Pancreas (tissue), 10 donors: ENCODE measurements at regions of chr7 and their contacts with region 1.

Region 1: DNA sequence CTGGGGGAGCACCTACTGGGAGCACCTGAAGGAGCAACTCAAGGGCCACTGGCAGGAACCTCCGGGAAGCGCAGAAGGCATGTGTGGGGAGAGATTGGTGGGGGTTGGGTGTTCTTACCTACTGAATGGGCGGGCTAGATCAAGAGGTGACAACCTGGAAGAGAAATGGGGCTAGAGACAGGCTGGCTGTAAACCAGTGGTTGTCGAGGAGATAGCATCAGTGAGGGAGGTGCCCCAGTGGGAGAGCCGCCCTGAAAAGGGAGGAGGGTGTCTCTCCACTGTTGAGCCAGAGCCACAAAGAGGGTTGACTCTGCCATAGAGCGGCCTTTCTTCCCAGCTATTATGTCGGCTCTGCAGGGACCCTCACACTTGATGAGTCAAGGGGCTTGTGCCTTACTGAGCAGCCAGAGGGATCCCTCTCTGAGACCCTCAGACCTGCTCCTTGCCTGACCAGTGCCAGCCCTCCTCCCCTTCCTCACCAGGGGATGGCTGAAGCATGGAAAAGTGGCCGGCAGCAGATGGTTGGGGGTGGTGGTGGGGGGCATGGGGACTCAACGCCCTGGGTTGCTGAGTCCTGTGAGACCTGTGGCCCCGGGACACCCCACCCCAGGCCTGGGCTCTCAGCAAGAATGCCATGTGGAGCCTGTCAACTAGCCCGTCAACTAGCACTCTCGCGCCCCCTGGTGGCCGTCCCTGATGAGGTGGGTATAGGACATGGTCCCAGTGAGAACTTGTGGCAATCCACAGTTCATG is 36.5 kb upstream of the PURB start:
- DNase-seq: peak; percentile 72 to 100 (median 91)
- ATAC-seq: peak; percentile 98 to 100 (median 99)
- H3K4me3 ChIP-seq: no peak overlapping the region
- H3K27ac ChIP-seq: no peak overlapping the region
- H3K4me1 ChIP-seq: no peaks in the 10 kb centered on the region
- H3K27me3 ChIP-seq: no peaks in the 10 kb centered on the region
- CTCF ChIP-seq: peak; percentile 75 to 93 (median 88)

Region 2: DNA sequence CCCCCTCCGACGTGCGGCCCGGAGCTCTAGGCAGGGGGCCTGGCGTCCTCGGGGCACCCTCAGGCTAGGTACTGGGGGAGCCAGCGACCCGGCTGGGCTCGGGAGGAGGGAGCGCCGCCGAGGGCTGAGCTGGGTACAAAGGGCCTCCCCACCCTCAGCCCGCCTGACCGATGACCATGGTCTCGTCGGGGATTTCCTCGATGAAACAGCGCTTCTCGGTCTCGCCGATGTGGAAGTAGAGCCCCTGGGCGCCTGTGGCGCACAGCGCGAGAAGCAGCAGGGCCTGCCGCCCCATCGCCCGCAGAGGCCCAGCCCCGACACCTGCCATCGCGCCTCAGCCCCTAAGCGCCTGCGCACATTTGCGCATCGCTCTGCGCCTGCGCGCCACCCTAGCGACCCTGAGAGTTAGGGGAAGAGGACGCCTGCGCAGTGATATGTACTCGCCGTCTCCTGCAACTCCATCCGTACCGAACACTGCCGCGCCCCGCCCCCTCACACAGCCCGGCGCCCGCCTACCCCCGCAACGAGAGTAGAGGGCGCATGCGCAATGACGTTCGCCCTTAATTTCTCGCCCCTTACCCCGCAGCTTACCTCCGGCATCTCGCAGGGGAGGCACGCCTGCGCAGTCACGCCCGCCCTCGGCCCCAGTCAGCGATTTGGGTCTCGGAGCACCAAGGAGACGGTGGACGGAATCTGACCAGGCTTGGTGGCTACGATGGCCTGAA is 339.7 kb before region 1 on chr7 and contains the start of gene TMED4:
- intact Hi-C with region 1: loop called in 2 of 3 experiments (anchors 5 to 10 kb)
- DNase-seq: peak; percentile 99 to 100 (median 100)
- ATAC-seq: peak; percentile 95 to 98 (median 96)
- H3K4me3 ChIP-seq: peak within 1 kb of the TSS; percentile 74 to 99 (median 92)
- H3K27ac ChIP-seq: peak within 1 kb of the TSS; percentile 92 to 99 (median 98)
- H3K4me1 ChIP-seq: peaks cover 7 to 16% (median 16%) of the 10 kb centered on the region in 3 donors
- H3K27me3 ChIP-seq: no peaks in the 10 kb centered on the region
- CTCF ChIP-seq: no peak
- total RNA-seq, gene TMED4: 38.2 to 53.0 (median 47.0) TPM

Region 3: DNA sequence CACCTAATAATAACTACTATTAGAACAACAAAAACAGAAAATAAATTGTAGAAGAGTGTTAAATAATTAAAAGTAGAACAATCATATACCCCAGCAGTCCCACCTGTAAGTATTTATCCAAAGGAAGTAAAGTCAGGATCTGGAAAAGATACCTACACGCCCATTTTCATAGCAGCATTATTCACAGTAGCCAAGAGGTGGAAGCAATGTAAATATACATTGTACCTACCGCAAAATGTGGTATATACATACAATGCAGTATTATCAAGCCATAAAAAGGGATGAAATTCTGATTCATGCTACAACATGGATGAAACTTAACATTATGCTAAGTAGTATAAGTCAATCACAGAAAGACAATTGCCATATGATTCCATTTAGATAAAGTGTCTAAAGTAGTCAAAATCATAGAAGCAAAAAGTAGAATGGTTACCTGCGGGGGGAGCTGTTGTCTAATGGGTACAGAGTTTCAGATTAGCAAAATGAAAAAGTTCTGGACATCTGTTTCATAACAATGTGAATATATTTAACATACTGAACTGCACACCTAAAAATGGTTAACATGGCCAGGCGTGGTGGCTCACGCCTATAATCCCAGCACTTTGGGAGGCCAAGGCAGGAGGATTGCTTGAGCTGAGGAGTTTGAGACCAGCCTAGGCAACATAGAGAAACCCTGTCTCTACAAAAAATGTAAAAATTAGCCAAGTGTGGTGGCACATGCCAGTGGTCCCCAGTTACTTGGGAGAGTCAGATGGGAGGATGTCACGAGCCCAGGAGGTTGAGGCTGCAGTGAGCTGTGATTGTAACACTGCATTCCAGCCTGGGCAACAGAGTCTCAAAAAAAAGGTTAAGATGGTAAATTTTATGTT is 333.7 kb before region 1 on chr7:
- intact Hi-C with region 1: loop called in 2 of 3 experiments (anchors 5 to 10 kb)
- DNase-seq: peak in 3 of 6 donors; percentile 43 to 59 (median 48)
- ATAC-seq: peak; percentile 81 to 95 (median 92)
- H3K4me3 ChIP-seq: no peak overlapping the region
- H3K27ac ChIP-seq: no peak overlapping the region
- H3K4me1 ChIP-seq: peaks cover 0 to 5% (median 1%) of the 10 kb centered on the region in 3 donors
- H3K27me3 ChIP-seq: no peaks in the 10 kb centered on the region
- CTCF ChIP-seq: peak in 3 of 4 donors; percentile 27 to 43 (median 40)

Region 4: GRCh38 chr7:44858161-44858560 is 63.6 kb before region 1 on chr7:
- intact Hi-C with region 1: loop called in 2 of 3 experiments (anchors 5 kb)
- DNase-seq: no peak
- ATAC-seq: no peak
- H3K4me3 ChIP-seq: no peak overlapping the region
- H3K27ac ChIP-seq: no peak overlapping the region
- H3K4me1 ChIP-seq: no peaks in the 10 kb centered on the region
- H3K27me3 ChIP-seq: no peaks in the 10 kb centered on the region
- CTCF ChIP-seq: no peak